ENCODE measurements at regions of chr14 and their contacts with region 1.

Region 1: DNA sequence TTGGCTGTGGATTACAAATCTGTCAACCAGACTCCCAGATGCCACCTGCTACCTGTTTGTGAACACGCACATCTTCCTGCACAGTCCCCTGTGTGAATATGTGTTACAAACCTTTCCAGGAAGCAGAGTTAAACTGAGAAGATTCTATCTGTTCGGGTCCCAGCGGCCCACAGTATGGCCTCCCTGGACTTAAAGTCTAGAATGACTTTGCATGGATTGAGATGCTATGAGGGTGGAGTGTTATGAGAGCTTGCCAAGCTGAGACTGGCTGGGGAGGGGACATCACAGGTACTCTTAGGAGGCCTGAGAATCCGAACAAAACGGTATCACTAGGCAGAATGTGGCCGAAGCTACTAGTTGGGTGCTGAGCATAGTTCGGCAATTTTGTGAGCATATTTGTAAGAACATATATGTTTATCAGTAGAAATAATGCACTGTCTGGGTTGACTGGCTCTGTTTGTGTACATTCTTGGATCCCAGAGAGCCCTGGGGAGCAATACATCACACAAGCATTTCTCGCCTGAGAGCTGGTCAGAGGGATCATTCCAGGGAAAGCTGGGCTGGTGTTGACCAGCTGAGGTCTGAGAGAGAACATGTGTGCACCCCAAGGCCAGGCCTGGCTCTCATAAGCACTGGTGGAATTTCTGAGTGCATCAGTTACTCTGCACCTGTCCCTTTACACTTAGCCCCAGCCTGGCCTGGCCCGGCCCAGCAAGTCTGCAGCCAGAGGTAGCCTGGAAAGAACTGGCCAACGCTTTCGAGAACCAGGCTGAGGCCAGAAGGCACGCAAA is 29.8 kb upstream of the LTBP2 start:
- DNase-seq: no peak
- H3K4me3 ChIP-seq: no peak overlapping the region
- H3K27ac ChIP-seq: no peak overlapping the region
- H3K4me1 ChIP-seq: peaks cover 24% of the 10 kb centered on the region
- H3K27me3 ChIP-seq: no peaks in the 10 kb centered on the region
- CTCF ChIP-seq: no peak

Region 2: DNA sequence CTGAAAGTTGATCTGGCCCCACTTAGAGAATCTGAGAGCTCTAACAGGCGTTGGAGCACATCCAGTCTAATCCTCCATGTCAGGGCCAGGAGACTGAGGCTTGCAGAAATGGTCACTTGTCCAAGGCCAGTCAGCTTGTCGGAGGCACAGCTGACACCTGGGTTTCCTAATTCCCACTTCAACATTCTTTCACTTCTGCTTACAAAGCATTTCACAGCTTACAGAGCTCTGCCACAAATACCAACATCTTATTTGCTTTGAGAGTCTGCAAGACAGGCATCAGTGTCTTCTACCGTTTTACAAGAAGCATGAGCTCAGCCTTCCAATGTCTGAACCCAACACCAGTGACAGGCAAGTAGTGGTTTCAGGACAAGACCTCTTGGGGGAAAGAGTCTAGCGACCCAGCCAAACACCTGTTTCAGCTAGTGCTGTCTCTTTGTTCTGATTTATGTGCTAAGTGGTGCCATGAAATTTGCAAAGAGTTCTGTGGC is 116.4 kb before region 1 on chr14:
- CTCF ChIA-PET with region 1: no interaction called
- dilution Hi-C with region 1: no loop called
- in situ Hi-C with region 1: no loop called
- intact Hi-C with region 1: no loop called
- DNase-seq: no peak
- H3K4me3 ChIP-seq: no peak overlapping the region
- H3K27ac ChIP-seq: no peak overlapping the region
- H3K4me1 ChIP-seq: peaks cover 19% of the 10 kb centered on the region
- H3K27me3 ChIP-seq: no peaks in the 10 kb centered on the region
- CTCF ChIP-seq: no peak

Region 3: GRCh38 chr14:74571901-74572725 is 69.7 kb before region 1 on chr14:
- CTCF ChIA-PET with region 1: no interaction called
- dilution Hi-C with region 1: loop called (anchors 5 kb)
- in situ Hi-C with region 1: no loop called
- intact Hi-C with region 1: no loop called
- DNase-seq: peak; percentile 99
- H3K4me3 ChIP-seq: peak overlapping the region; percentile 24 to 37 (median 30)
- H3K27ac ChIP-seq: peak overlapping the region; percentile 98
- H3K4me1 ChIP-seq: peaks cover 85% of the 10 kb centered on the region
- H3K27me3 ChIP-seq: no peaks in the 10 kb centered on the region
- CTCF ChIP-seq: no peak

Region 4: GRCh38 chr14:74599946-74600345 is 41.9 kb before region 1 on chr14:
- CTCF ChIA-PET with region 1: no interaction called
- dilution Hi-C with region 1: loop called (anchors 5 kb)
- in situ Hi-C with region 1: no loop called
- intact Hi-C with region 1: no loop called
- DNase-seq: no peak
- H3K4me3 ChIP-seq: no peak overlapping the region
- H3K27ac ChIP-seq: no peak overlapping the region
- H3K4me1 ChIP-seq: peaks cover 4% of the 10 kb centered on the region
- H3K27me3 ChIP-seq: no peaks in the 10 kb centered on the region
- CTCF ChIP-seq: no peak

Measured in mammary epithelial cell (primary cell).